PC-9 (cell line): ENCODE measurements at regions of chr16 and their contacts with region 1.

Region 1: DNA sequence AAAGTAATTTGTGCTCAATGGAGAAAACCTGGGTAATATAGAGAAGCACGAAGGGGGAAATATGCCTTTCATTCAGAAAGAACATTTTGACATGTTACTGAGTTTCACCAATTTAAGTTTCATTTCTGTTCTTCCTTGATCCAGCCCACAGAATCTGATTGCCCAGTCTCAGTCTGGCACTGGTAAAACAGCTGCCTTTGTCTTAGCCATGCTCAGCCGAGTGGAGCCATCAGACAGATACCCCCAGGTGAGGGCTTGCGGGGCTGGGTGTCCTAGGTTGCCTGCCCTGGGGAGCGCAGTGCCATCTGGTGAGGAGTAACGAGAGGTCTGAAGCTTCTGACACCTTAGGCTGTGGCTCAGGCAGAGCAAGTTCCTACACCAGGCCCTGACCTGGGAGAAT is 17.7 kb downstream of the DDX19A start:
- DNase-seq: no peak
- H3K4me3 ChIP-seq: no peak overlapping the region
- H3K27ac ChIP-seq: no peak overlapping the region
- H3K4me1 ChIP-seq: no peaks in the 10 kb centered on the region
- H3K27me3 ChIP-seq: no peaks in the 10 kb centered on the region
- CTCF ChIP-seq: no peak

Region 2: GRCh38 chr16:70568601-70569237 is 204.3 kb after region 1 on chr16:
- CTCF ChIA-PET with region 1: interaction called, 12 read pairs
- POLR2A ChIA-PET with region 1: no interaction called
- intact Hi-C with region 1: no loop called
- DNase-seq: peak; percentile 76 to 99
- H3K4me3 ChIP-seq: no peak overlapping the region
- H3K27ac ChIP-seq: peak overlapping the region; percentile 76
- H3K4me1 ChIP-seq: peaks cover 70% of the 10 kb centered on the region
- H3K27me3 ChIP-seq: no peaks in the 10 kb centered on the region
- CTCF ChIP-seq: no peak